Ascending aorta (tissue), 2 donors: ENCODE measurements at regions of chr17 and their contacts with region 1.

Region 1: DNA sequence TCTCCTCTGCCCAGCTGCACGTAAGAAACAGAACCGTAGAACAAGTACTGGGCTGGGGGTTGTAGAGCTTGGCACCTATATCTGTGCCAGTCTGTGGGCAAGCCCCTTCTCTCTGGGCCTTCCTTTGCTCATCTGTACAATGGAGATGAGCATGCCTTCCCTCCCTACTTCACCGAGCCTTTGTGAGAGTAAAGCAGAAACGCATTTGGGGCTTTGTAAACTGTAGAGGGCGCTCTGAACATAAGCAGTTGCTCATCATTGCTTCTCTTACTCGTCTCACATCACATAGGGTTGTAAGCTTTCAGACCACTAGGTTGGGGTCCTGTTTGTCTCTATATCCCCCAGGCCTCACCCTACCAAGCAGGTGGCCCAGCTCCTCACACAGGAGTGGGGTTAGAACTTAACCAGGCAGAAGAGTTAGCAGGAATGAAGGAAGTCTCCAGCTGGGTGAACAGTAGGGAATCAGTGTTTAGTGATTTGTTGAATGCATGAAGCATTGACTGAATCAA is 15.1 kb downstream of the SAMD14 start:
- DNase-seq: no peak
- H3K4me3 ChIP-seq: no peak overlapping the region
- H3K27ac ChIP-seq: no peak overlapping the region
- H3K4me1 ChIP-seq: peaks cover 21 to 28% of the 10 kb centered on the region in 2 donors
- H3K27me3 ChIP-seq: no peaks in the 10 kb centered on the region
- CTCF ChIP-seq: peak; percentile 50 to 71 (median 64)

Region 2: DNA sequence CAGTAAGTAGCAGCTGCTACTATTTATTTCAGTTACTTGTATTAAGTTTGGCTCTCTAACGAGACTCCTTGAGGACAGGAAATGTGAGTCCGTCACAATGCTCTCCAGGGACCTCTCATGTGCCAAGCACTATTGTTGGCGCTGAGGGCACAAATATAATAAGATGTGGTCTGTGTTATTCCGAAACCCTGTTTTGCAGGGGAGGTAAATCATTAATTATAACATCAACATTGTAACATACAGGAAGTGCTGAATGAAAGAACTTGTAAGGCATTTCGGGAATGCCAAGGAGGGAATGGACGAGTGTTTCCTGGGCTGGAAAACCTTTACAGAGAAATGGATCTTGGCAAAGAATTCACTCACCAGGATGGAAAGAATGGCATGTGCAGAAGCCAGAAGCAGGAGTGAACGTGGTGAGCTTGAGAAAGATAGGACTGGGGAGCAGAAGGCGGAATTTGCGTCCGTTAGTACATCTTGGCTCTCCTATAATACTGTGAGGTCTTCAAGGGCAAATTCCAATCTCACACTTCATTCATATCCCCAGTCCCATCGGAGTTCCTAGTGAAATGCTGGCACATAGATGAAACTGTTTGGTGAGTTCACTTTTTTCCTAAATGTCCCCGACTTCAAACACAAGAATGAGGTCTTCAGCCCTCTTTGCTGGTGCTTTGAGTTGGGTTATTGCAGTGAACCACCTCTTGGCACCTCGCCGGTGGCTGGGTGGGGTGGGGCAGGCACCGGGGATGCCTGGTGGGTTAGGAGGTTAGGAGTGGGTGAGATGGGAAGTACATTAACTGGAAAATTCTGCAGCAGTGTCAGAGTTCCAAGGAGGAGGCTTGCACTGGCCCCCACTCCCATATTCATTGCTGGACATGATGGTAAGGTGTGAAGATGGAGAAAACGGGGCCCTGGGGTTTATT is 278.5 kb before region 1 on chr17:
- intact Hi-C with region 1: no loop called
- DNase-seq: peak in 1 of 2 donors; percentile 89
- H3K4me3 ChIP-seq: no peak overlapping the region
- H3K27ac ChIP-seq: peak overlapping the region; percentile 79 to 82
- H3K4me1 ChIP-seq: peaks cover 5 to 28% of the 10 kb centered on the region in 2 donors
- H3K27me3 ChIP-seq: no peaks in the 10 kb centered on the region
- CTCF ChIP-seq: no peak

Region 3: DNA sequence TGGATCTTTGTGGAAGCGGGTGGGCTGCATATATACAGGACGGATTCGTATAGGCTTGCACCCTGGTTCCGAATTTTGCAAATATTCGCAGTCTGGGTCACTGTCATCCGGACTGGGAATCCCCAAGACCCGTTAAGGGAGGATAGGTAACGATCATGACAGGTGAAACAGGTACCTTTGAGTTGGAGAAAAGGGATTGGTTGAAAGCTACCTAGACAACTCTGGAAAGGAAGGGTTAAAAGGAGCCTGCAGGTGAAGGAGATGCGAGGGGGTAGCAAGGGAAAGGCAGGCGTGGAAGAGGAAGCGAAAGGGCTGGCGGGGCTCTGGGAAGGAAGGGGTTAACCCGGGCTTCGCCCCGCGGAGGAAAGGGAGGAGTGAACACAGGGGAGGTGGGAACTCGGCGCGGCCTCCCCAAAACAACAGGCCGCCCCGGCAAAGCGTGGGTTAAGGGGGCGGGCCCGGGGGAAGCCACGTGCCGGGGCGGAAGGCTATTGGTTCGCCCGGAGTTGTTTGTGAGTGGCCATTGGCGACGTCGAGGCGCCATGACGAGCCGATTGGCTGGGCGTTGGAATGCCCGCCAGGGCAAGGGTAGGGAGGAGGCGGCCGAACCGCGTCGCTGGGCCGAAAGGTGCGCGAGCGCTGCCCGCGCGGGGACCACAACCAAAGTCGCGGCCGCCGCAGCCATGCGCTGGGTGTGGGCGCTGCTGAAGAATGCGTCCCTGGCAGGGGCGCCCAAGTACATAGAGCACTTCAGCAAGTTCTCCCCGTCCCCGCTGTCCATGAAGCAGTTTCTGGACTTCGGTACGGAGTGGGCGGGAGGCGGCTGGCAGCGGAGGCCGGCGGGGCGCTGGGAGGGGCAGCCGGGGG is 19.9 kb before region 1 on chr17 and contains the start of gene PDK2:
- intact Hi-C with region 1: loop called (anchors 1 kb)
- DNase-seq: peak; percentile 90 to 98
- H3K4me3 ChIP-seq: peak within 1 kb of the TSS; percentile 78 to 84
- H3K27ac ChIP-seq: peak within 1 kb of the TSS; percentile 75 to 87
- H3K4me1 ChIP-seq: peaks cover 6 to 16% of the 10 kb centered on the region in 2 donors
- H3K27me3 ChIP-seq: no peaks in the 10 kb centered on the region
- CTCF ChIP-seq: no peak
- total RNA-seq, gene PDK2: 73.5 TPM

Region 4: DNA sequence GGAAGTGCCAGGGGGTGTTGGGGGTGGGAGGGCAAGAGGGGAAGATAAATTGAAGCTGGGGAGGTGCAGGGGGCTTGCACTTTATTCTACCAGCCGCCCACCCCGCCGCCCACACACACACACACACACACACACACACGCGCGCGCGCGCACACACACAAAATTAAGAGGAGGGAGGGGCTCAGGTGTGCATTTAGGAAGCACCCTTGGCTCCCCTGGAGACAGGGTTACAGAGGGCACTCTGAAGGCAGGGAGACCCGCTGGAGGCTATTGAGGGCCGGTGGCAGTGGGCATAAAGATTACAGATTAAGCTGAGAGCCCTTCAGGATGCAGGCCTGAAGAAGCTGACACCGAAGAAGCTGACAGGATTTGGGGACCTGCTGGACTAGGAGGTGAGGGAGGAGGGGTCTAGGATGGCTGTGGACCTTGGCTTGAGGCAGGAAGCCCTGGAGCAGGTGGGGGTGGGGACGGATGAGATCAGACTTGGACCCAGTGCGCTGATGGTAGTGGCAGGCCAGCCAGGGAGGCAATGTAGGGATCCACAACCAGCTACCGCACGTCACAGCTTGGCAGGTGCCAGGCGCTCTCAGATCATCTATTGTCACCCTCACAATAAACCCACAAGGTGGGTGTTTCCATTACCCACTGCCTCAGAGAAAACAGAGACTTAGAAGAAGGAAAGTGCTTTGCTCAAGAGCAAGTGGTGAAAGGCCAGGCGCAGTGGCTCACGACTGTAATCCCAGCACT is 15.8 kb after region 1 on chr17:
- intact Hi-C with region 1: loop called (anchors 1 kb)
- DNase-seq: no peak
- H3K4me3 ChIP-seq: peak overlapping the region in 1 of 2 donors; percentile 89
- H3K27ac ChIP-seq: no peak overlapping the region
- H3K4me1 ChIP-seq: peaks cover 34 to 53% of the 10 kb centered on the region in 2 donors
- H3K27me3 ChIP-seq: no peaks in the 10 kb centered on the region
- CTCF ChIP-seq: no peak

Region 5: DNA sequence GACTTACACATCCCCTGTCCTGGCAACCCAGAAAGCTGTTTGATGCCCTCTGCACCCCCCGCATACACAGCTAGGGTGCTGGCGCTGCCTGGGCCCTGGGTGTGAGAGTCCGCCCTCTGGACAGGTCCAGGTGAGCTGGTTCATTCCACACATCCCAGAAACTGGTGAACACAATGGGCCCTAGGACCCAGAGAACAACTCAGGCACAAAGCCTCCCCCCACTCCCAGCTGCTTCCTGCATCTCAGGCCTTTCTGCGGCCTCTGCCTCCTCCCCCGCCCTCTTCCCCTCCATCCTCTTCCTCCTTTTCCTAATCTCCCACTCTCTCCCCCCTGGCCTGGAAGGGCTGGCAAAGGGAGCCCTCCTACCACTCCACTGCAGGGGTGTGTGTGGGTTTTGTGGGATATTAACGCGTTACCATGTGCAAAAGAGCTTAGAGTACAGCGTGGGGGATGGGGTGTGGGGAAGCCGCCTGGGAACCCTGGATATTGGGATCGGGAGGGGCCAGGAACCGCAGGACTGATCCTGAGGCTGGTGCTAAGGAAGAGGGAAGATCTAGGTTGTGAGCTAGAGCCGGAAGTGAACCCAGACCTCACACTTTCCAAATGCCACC is 37.1 kb after region 1 on chr17:
- intact Hi-C with region 1: loop called (anchors 5 kb)
- DNase-seq: peak; percentile 72 to 90
- H3K4me3 ChIP-seq: peak overlapping the region; percentile 73 to 76
- H3K27ac ChIP-seq: peak overlapping the region; percentile 91 to 93
- H3K4me1 ChIP-seq: peaks cover 31 to 54% of the 10 kb centered on the region in 2 donors
- H3K27me3 ChIP-seq: no peaks in the 10 kb centered on the region
- CTCF ChIP-seq: no peak

Region 6: GRCh38 chr17:50161023-50161910 is 46.4 kb after region 1 on chr17:
- intact Hi-C with region 1: loop called (anchors 2 kb)
- DNase-seq: peak; percentile 67 to 96
- H3K4me3 ChIP-seq: peak overlapping the region; percentile 51 to 73
- H3K27ac ChIP-seq: peak overlapping the region; percentile 80 to 89
- H3K4me1 ChIP-seq: peaks cover 9 to 29% of the 10 kb centered on the region in 2 donors
- H3K27me3 ChIP-seq: no peaks in the 10 kb centered on the region
- CTCF ChIP-seq: peak; percentile 92 to 98 (median 94)

Region 7: DNA sequence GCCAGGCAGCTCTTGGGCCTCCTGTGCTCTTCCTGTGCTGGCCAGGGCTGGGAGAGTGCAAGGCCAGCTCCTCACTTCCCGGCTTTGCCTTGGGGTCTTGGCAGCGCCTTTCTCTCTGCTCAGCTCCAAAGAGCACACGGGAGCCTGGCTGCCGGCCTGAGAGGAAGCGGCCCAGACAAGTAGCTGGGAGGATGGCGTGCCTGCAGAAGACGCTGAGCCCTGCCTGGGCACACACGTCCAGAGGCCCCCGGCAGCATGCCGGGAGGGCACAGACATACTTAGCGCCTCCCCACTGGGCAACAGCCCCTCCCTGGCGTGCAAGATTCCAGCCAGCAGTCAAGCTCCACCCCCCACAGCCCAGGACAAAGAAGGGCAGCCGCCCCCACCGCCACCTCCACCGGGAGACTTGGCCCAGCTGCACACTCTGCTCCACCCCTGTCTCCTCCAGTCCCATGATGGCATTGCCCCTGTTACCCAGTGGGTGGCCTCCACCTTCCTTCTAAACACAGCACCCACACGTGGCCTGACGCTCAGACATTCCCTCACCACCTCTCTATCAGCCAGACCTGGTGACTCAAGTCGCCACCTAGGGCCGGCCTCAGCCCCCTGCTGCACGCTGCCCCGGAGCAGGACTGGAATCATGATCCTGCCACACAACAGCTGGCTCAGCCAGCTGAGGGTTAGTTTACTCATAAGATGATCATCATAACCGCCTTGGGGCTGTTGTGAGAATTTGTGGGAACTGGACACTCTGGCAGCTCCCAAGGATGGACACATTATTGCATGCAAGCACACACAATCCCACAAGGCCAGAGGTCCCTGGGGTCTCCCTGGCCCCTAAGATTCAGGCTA is 63.3 kb after region 1 on chr17:
- intact Hi-C with region 1: loop called (anchors 5 kb)
- DNase-seq: peak; percentile 93 to 98
- H3K4me3 ChIP-seq: no peak overlapping the region
- H3K27ac ChIP-seq: peak overlapping the region; percentile 97 to 99
- H3K4me1 ChIP-seq: peaks cover 24 to 44% of the 10 kb centered on the region in 2 donors
- H3K27me3 ChIP-seq: no peaks in the 10 kb centered on the region
- CTCF ChIP-seq: peak; percentile 32 to 49 (median 34)

Region 8: DNA sequence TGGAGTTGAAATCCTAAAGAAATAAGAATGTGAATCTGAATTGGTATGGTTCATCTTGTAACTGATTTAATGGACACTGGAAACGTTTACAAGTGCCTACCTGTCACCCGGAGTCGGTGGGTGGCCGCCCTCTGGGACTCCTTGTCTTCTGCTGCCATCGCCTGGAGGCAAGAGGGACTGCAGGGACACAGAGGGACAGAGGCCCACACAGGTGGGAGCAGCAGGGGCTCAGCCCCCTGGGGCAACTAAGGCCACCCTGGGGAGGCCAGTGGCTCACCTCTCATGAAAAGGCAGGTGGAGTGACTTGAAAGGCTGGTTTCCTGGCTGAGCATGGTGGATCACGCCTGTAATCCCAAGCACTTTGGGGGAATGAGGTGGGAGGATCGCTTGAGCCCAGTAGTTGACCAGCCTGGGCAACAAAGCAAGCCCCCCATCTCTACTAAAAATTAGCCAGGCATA is 182.5 kb after region 1 on chr17:
- intact Hi-C with region 1: loop called (anchors 5 kb)
- DNase-seq: peak; percentile 43 to 85
- H3K4me3 ChIP-seq: no peak overlapping the region
- H3K27ac ChIP-seq: no peak overlapping the region
- H3K4me1 ChIP-seq: no peaks in the 10 kb centered on the region
- H3K27me3 ChIP-seq: no peaks in the 10 kb centered on the region
- CTCF ChIP-seq: peak; percentile 98 to 99 (median 98)